Activated CD8-positive, alpha-beta T cell treated with anti-CD3 and anti-CD28 coated beads, Interleukin-2, amount 10 ng/mL, durations not matched to agents 7 days and 5 days (primary cell): ENCODE measurements at regions of chr10 and their contacts with region 1.

Region 1: GRCh38 chr10:50497757-50498156 is 126.0 kb downstream of the SGMS1 start:
- DNase-seq: no peak
- ATAC-seq: no peak
- H3K4me3 Mint-ChIP-seq: no peak overlapping the region
- H3K27ac Mint-ChIP-seq: no peak overlapping the region
- H3K4me1 Mint-ChIP-seq: peaks cover 27% of the 10 kb centered on the region
- H3K27me3 Mint-ChIP-seq: no peaks in the 10 kb centered on the region

Region 2: DNA sequence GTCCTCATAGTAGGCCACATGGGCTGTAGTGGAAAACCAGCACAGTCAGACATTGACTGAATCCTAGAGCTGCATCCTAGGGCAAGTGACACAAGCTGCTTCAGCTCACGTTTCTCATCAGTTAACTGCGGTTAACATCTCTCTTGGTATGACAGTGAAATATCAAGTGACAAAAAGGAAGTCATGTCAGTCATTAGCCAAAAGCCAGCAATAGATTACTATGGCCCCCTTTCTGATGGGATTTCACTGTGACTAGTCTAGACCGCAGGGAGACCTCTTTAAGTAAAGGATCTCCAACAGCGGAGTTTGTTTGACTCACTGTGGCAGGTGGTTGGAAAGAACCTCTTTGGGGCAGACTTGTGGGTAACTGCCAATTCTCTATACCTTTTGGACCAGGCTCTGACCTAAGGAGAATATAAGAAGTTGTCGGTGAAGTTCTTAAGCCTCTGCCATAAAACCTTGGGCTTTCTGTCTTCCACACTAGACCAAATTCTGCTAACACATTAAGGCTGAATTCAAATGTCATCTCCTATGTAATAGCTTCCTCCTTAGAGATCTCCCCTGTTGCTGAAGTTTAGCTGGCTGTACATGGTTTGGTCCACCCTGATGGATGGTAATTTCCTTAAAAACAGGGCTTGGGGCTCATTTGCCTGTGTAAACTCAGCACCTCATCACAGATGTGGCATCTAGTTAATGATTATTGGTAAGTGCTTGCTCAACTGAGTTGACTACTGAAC is 10.7 kb after region 1 on chr10:
- CTCF ChIA-PET with region 1: interaction called, 17 read pairs
- POLR2A ChIA-PET with region 1: interaction called, 3 read pairs
- DNase-seq: peak; percentile 41
- ATAC-seq: peak; percentile 54
- H3K4me3 Mint-ChIP-seq: no peak overlapping the region
- H3K27ac Mint-ChIP-seq: no peak overlapping the region
- H3K4me1 Mint-ChIP-seq: peaks cover 67% of the 10 kb centered on the region
- H3K27me3 Mint-ChIP-seq: no peaks in the 10 kb centered on the region

Region 3: DNA sequence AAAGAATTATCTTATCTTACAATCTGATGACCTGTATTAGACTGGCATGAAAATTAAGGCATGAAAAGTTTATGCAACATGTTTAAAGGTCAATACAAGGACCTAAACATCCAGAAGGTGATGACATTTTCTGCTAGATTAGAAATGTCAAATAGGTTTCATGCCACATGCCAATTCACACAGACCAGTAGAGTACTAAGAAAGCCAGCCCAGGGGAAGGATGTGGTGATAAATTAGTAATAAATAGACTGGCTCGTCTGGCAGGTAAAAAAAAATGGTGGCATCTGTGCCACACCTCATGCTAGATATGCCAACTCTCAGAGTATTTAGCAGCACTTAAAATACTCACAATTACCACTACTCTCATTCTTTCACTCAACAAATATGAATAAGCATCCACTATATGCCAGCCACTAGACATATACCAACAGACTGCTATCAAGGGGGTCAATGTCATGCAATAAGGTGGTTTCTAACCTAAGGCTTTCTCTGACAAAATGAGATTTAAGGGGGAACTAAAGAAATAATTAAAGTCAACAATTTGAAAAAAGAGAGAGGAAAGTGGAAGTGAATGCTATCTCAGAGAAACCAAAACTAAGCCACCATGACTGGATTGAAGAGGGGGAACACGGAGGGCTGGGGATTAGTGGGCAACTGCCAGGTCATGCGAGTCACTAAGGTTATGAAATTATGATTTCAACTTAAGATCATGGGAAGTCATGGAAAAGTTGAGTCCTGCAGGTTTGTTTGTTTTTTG is 42.5 kb after region 1 on chr10:
- CTCF ChIA-PET with region 1: no interaction called
- POLR2A ChIA-PET with region 1: no interaction called
- DNase-seq: peak; percentile 47
- ATAC-seq: peak; percentile 67
- H3K4me3 Mint-ChIP-seq: peak overlapping the region; percentile 53
- H3K27ac Mint-ChIP-seq: peak overlapping the region; percentile 88
- H3K4me1 Mint-ChIP-seq: peaks cover 77% of the 10 kb centered on the region
- H3K27me3 Mint-ChIP-seq: no peaks in the 10 kb centered on the region